ENCODE measurements at regions of chr4 and their contacts with region 1.

Region 1: DNA sequence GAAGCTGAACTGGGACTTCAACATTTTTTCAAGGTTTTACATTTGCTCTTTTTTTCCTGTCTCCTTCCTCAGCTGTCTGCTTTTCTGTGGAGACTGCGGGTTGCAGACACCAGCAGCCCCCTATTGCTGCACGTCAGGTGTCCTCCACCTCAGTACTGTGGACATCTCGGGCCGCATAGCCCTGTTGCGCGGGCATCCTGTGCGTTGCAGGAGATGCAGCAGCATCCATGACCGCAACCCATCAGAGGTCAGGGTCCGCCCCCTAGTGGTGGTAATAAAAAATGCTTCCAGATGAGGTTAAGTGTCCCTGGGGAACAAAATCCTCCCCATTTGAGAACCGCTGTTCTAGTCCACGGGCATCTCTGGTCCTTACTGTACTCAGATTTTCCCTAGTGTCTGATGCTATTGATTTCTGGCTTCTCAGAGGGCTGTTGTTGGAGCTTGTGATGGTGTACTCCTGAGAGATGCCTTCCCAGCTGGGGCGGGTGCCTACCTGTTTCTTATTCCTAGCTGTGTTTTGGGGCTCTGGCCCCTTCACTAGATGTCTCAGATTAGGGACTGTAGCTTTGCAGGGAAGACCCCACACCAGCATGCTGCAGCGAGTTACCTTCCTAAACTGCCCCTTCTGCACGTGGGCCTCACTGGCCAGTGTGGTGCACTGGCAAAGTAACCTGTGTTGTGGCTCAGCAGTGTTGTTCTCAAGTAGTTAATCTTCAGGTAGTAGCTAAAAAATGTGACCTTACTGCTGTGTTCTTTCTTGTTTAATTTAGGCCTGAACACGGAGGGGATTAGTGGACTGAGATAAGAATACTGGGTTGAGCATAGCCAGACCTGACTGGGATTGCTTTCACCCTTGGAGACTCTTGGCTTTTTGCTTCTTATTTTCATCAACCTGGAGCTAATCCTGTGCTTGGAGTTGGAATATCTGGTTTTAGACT is 28.2 kb downstream of the NSD2 start:
- DNase-seq: no peak
- H3K4me3 ChIP-seq: no peak overlapping the region
- H3K27ac ChIP-seq: no peak overlapping the region
- H3K4me1 ChIP-seq: no peaks in the 10 kb centered on the region
- H3K27me3 ChIP-seq: no peaks in the 10 kb centered on the region
- CTCF ChIP-seq: peak; percentile 79 to 90 (median 87)
- POLR2A ChIP-seq: no peak

Region 2: DNA sequence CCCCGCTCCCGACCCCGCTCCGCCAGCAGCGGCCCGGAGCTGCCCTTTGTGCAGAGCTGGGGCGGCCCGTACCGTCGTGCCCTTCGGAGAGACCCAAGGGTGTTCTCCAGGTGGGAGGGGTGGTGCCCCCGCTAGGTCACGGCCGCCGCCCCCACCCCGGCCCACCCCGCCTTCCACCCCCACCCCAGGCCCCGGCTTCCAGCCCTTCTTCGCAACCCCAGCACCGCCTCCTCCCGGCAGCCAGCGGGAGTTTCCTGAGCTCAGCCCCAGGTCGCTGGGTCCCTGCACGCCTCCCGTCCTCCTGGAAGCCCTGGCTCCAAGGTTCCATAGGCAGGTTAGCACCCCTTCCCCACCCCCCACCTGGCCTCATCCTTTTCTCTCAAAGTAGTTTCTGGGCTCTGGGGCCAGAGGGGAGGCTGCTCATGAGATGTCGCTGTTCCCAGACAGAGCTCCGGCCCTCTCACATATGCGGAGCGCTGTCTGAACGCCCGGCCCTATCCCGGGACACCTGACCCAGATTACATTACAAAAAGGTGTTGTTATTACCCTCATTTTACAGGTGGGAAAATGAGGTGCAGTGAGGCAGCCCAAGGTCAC is 131.6 kb before region 1 on chr4:
- intact Hi-C with region 1: loop called (anchors 10 kb)
- DNase-seq: no peak
- H3K4me3 ChIP-seq: peak overlapping the region; percentile 45 to 63
- H3K27ac ChIP-seq: no peak overlapping the region
- H3K4me1 ChIP-seq: peaks cover 69% of the 10 kb centered on the region
- H3K27me3 ChIP-seq: no peaks in the 10 kb centered on the region
- CTCF ChIP-seq: no peak
- POLR2A ChIP-seq: no peak